ENCODE measurements at regions of chr11 and their contacts with region 1.

Region 1: DNA sequence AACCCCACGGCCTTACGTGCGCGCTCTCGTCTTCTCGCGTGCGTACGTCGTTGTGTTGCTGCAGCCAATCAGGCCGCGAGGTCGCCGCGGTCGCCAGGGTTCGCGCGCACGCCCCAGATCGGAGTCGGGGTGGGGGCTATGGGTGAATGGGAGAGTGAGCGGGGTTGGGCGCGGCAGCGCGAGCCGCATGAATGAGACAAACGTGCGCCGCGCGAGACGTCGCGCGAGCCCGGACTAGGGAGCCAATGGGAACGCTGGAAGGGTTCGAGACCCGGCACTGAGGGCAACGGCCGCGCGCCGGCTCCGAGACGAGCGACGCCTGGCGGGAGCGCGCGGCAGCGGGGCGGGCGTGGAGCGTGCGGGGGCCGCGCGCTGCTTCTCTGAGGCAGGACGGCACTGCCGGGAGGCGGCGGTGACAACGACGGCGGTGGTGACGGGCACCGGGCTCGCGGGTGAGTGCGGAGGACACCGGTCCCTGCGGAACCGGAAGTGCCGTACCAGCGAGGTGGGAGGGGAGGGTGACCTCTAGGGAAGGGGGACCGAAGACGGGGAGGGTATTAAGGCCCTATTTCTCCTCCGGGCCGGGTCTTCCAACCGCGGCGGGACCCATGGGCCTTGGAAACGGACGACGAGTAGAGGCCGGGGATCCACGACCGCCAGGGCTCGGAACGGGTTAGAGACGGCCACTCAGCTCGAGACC is at the start of gene ZDHHC5:
- DNase-seq: peak; percentile 98 to 100
- H3K4me3 ChIP-seq: peak within 1 kb of the TSS; percentile 90 to 96
- H3K27ac ChIP-seq: peak within 1 kb of the TSS; percentile 98
- H3K4me1 ChIP-seq: peaks cover 6 to 16% of the 10 kb centered on the region in 2 donors
- H3K27me3 ChIP-seq: no peaks in the 10 kb centered on the region
- CTCF ChIP-seq: peak; percentile 33 to 69 (median 34)
- total RNA-seq, gene ZDHHC5: 26.2 TPM

Region 2: DNA sequence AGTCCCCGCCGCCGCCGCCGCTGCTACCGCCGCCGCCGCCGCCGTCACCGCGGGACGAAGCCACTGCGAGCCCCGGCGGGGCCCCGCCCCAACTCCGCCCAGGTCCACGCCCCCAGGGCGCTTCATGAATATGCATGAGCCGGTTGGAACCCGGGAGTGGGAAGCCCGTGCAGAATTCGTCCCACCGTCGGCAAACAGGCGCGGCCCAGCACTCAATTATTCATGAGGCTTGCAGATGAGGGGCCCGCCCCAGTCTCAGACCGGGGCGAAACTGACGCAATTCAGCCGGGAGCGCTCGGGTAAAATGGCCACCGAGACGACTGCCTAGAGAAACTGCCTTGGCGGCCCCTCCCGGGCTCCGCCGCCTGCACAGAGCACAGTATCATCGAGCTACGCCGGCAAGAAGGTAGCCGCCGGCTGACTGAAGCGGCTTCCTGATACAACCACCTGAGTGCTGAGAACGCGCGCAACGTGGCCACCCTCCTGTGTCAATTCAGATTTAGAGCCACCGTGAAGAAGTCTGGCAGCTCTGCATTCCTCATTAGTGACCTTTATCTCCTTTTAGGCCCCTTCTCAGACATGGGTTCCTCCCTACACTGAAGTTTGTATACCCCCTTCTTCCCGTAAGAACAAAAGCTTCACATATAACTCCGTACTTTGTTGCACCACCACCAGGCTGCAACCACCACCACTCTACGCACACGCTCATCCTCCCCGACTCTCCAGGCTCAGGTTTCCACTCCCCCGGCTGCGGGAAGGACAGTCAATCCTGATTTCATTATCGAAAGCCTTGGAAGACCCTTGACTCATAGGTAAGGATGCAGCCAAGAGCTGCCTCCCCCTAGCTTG is 342.8 kb before region 1 on chr11 and contains the start of gene TNKS1BP1:
- intact Hi-C with region 1: loop called (anchors 1 kb)
- DNase-seq: peak; percentile 97 to 99
- H3K4me3 ChIP-seq: peak within 1 kb of the TSS; percentile 90 to 94
- H3K27ac ChIP-seq: peak within 1 kb of the TSS; percentile 94 to 98
- H3K4me1 ChIP-seq: peaks cover 8 to 28% of the 10 kb centered on the region in 2 donors
- H3K27me3 ChIP-seq: no peaks in the 10 kb centered on the region
- CTCF ChIP-seq: no peak
- total RNA-seq, gene TNKS1BP1: 131 TPM

Region 3: GRCh38 chr11:57426929-57427726 is 240.8 kb before region 1 on chr11 and contains the start of gene SLC43A3:
- intact Hi-C with region 1: loop called (anchors 5 kb)
- DNase-seq: peak; percentile 43 to 89
- H3K4me3 ChIP-seq: peak within 1 kb of the TSS; percentile 49 to 80
- H3K27ac ChIP-seq: peak within 1 kb of the TSS; percentile 97 to 98
- H3K4me1 ChIP-seq: peaks cover 23 to 43% of the 10 kb centered on the region in 2 donors
- H3K27me3 ChIP-seq: no peaks in the 10 kb centered on the region
- CTCF ChIP-seq: no peak
- total RNA-seq, gene SLC43A3: 211 TPM

Region 4: GRCh38 chr11:57657194-57658022 is 10.5 kb before region 1 on chr11 and contains the start of gene CLP1:
- intact Hi-C with region 1: loop called (anchors 1 kb)
- DNase-seq: peak; percentile 98 to 100
- H3K4me3 ChIP-seq: peak within 1 kb of the TSS; percentile 67 to 70
- H3K27ac ChIP-seq: peak within 1 kb of the TSS; percentile 87 to 88
- H3K4me1 ChIP-seq: peaks cover 0 to 6% of the 10 kb centered on the region in 2 donors
- H3K27me3 ChIP-seq: no peaks in the 10 kb centered on the region
- CTCF ChIP-seq: no peak
- total RNA-seq, gene CLP1: 1.2 TPM

Region 5: GRCh38 chr11:57741132-57742086 is 73.5 kb after region 1 on chr11 and contains the start of gene SELENOH:
- intact Hi-C with region 1: loop called (anchors 1 kb)
- DNase-seq: peak; percentile 84 to 98
- H3K4me3 ChIP-seq: peak within 1 kb of the TSS; percentile 91 to 93
- H3K27ac ChIP-seq: peak within 1 kb of the TSS; percentile 95 to 97
- H3K4me1 ChIP-seq: peaks cover 0 to 15% of the 10 kb centered on the region in 2 donors
- H3K27me3 ChIP-seq: no peaks in the 10 kb centered on the region
- CTCF ChIP-seq: no peak
- total RNA-seq, gene SELENOH: 113 TPM

Region 6: GRCh38 chr11:57761301-57762234 is 93.7 kb after region 1 on chr11 and contains the start of gene CTNND1:
- intact Hi-C with region 1: loop called (anchors 5 kb)
- DNase-seq: peak; percentile 68 to 95
- H3K4me3 ChIP-seq: peak within 1 kb of the TSS; percentile 66 to 79
- H3K27ac ChIP-seq: peak within 1 kb of the TSS; percentile 87 to 96
- H3K4me1 ChIP-seq: peaks cover 0 to 21% of the 10 kb centered on the region in 2 donors
- H3K27me3 ChIP-seq: no peaks in the 10 kb centered on the region
- CTCF ChIP-seq: no peak
- total RNA-seq, gene CTNND1: 69.5 TPM

Measured in ascending aorta (tissue), 2 donors.